Thyroid gland (tissue), 4 donors: ENCODE measurements at regions of chr1 and their contacts with region 1.

Region 1: GRCh38 chr1:212291505-212292134 is 6.4 kb downstream of the PPP2R5A start:
- DNase-seq: no peak
- H3K4me3 ChIP-seq: no peak overlapping the region
- H3K27ac ChIP-seq: peak overlapping the region in 1 of 3 donors; percentile 20
- H3K4me1 ChIP-seq: peaks cover 27 to 46% of the 10 kb centered on the region in 2 donors
- H3K27me3 ChIP-seq: no peaks in the 10 kb centered on the region
- CTCF ChIP-seq: peak in 5 of 6 experiments; percentile 23 to 65 (median 45)
- POLR2A ChIP-seq: no peak

Region 2: GRCh38 chr1:212070720-212071302 is 220.8 kb before region 1 on chr1:
- intact Hi-C with region 1: loop called (anchors 10 kb)
- DNase-seq: no peak
- H3K4me3 ChIP-seq: no peak overlapping the region
- H3K27ac ChIP-seq: no peak overlapping the region
- H3K4me1 ChIP-seq: no peaks in the 10 kb centered on the region
- H3K27me3 ChIP-seq: no peaks in the 10 kb centered on the region
- CTCF ChIP-seq: peak; percentile 43 to 91 (median 76)
- POLR2A ChIP-seq: no peak

Region 3: DNA sequence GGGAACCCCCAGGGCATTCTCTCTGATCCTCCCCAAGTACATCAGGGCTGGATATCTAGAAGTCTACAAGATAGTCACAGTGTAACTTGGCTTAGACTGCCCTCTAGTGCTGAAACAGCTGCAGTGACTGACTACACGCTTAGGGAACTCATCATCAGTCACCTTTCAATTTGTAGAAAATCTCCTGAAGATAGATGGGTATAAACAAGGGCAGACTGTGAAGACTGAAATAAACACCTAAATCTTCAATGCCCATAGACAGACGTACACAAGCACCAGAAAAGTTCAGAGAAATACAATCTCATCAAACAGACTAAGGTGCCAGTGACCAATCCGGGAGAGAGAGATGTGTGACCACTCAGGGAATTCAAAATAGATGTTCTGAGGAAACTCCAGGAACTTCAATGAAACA is 76.5 kb after region 1 on chr1:
- intact Hi-C with region 1: loop called (anchors 10 kb)
- DNase-seq: peak; percentile 60 to 62
- H3K4me3 ChIP-seq: no peak overlapping the region
- H3K27ac ChIP-seq: no peak overlapping the region
- H3K4me1 ChIP-seq: no peaks in the 10 kb centered on the region
- H3K27me3 ChIP-seq: no peaks in the 10 kb centered on the region
- CTCF ChIP-seq: peak; percentile 48 to 93 (median 86)
- POLR2A ChIP-seq: no peak